Activated CD4-positive, alpha-beta T cell treated with anti-CD3 and anti-CD28 coated beads, Interleukin-2, amount 10 ng/mL, durations not matched to agents 24 days and 14 days (primary cell): ENCODE measurements at regions of chr12 and their contacts with region 1.

Region 1: GRCh38 chr12:93441617-93442410 is at the start of gene UBE2N:
- DNase-seq: peak; percentile 99
- H3K4me3 Mint-ChIP-seq: peak within 1 kb of the TSS; percentile 94
- H3K27ac Mint-ChIP-seq: peak within 1 kb of the TSS; percentile 97
- H3K4me1 Mint-ChIP-seq: peaks cover 43% of the 10 kb centered on the region
- H3K27me3 Mint-ChIP-seq: no peaks in the 10 kb centered on the region
- total RNA-seq, gene UBE2N: 225 and 243 TPM in 2 replicates

Region 2: DNA sequence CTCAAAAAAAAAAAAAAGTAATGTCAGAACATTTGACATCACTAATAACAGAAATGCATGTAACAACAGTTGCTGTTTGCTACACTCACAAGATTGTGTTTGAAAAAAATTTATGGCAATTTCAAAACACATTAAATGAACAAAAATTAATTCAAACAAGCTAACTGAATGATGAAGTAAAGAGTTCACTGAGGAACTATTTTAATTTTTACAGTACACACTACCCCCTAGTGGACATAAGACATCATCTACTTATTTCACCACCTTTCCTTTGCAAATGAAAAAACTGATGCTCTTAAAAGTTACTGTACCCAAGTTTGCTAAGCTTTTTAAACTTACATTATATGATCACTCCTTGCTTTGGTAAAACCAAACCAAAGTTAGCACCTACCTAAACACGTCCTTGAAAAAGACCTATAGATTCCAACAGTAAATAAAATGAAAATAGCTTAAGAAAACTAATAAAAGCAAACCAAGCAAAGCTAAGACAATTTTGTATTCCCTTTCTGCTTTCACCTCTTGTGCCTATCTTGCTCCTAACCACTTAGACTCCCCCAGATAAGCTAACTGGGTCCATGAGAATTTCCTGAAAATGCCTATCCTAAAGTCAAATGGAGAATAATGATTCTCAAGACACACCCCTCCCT is 22.3 kb before region 1 on chr12:
- intact Hi-C with region 1: loop called (anchors 2 kb)
- DNase-seq: peak; percentile 52
- H3K4me3 Mint-ChIP-seq: no peak overlapping the region
- H3K27ac Mint-ChIP-seq: peak overlapping the region; percentile 41
- H3K4me1 Mint-ChIP-seq: peaks cover 62% of the 10 kb centered on the region
- H3K27me3 Mint-ChIP-seq: no peaks in the 10 kb centered on the region

Region 3: GRCh38 chr12:93467351-93468007 is 25.7 kb after region 1 on chr12 and contains the start of gene MRPL42:
- intact Hi-C with region 1: loop called (anchors 1 kb)
- DNase-seq: peak; percentile 99
- H3K4me3 Mint-ChIP-seq: peak within 1 kb of the TSS; percentile 91
- H3K27ac Mint-ChIP-seq: peak within 1 kb of the TSS; percentile 93
- H3K4me1 Mint-ChIP-seq: peaks cover 29% of the 10 kb centered on the region
- H3K27me3 Mint-ChIP-seq: no peaks in the 10 kb centered on the region
- total RNA-seq, gene MRPL42: 92.4 and 96.0 TPM in 2 replicates